ENCODE measurements at regions of chr20 and their contacts with region 1.

Region 1: DNA sequence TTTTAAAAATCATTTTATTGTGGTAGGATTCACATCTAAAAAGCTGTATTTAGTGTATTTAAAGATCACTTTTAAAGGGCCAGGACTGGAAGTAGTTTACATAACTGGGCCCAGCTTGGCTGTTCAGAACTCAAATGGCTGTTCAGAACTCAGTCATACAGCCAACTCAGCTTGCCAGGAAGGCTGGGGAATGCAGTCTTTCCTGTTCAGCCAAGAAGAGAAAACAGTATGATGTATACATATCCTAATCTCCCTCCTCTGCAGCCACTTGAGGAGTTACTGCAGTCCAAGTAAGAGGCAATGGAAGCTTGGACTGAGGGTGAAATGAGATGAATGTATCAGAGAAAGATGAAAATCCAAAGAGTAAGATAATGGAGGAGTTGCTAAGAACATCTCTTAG is 24.6 kb downstream of the DSTN start:
- DNase-seq: peak; percentile 84 to 88
- H3K4me3 ChIP-seq: no peak overlapping the region
- H3K4me3 Mint-ChIP-seq: peak overlapping the region; percentile 46
- H3K27ac Mint-ChIP-seq: peak overlapping the region; percentile 46
- H3K4me1 ChIP-seq: peaks cover 43% of the 10 kb centered on the region
- H3K4me1 Mint-ChIP-seq: peaks cover 43% of the 10 kb centered on the region
- H3K27me3 ChIP-seq: no peaks in the 10 kb centered on the region
- H3K27me3 Mint-ChIP-seq: no peaks in the 10 kb centered on the region
- CTCF ChIP-seq: no peak

Region 2: GRCh38 chr20:17579369-17580039 is 14.9 kb before region 1 on chr20:
- CTCF ChIA-PET with region 1: no interaction called
- POLR2A ChIA-PET with region 1: interaction called, 3 read pairs
- intact Hi-C with region 1: loop called (anchors 2 kb)
- DNase-seq: no peak
- H3K4me3 ChIP-seq: no peak overlapping the region
- H3K4me3 Mint-ChIP-seq: no peak overlapping the region
- H3K27ac Mint-ChIP-seq: no peak overlapping the region
- H3K4me1 ChIP-seq: peaks cover 10% of the 10 kb centered on the region
- H3K4me1 Mint-ChIP-seq: peaks cover 19% of the 10 kb centered on the region
- H3K27me3 ChIP-seq: no peaks in the 10 kb centered on the region
- H3K27me3 Mint-ChIP-seq: no peaks in the 10 kb centered on the region
- CTCF ChIP-seq: no peak

Measured in Caco-2 (cell line).